ENCODE measurements at regions of chr12 and their contacts with region 1.

Region 1: GRCh38 chr12:103783744-103784664 is 57.0 kb downstream of the NT5DC3 start:
- DNase-seq: peak; percentile 46
- H3K4me3 ChIP-seq: no peak overlapping the region
- H3K27ac ChIP-seq: peak overlapping the region in 3 of 4 donors; percentile 44 to 58 (median 51)
- H3K4me1 ChIP-seq: peaks cover 0 to 16% (median 0%) of the 10 kb centered on the region in 4 donors
- H3K27me3 ChIP-seq: no peaks in the 10 kb centered on the region
- CTCF ChIP-seq: peak in 3 of 5 experiments; percentile 14 to 56 (median 35)
- EP300 ChIP-seq: no peak
- POLR2A ChIP-seq: no peak

Region 2: DNA sequence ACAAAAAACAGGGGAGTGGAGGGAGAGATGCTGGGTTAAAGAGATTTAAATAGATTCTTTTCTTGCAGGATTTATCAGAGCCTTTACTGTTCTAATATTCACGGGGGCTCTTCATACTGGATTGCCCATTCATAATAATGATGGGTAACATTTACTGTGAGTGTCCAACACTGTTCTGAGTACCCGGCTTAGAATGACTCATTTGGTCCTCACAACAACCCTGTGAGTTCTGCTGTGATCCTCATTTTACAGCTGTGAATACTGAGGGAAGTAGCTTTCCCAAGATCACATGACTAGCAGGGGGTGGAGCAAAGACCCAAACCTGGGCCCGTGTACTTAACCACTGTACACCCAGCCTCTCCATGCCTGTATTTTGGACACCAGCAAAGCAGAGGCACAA is 56.4 kb before region 1 on chr12:
- in situ Hi-C with region 1: no loop called
- intact Hi-C with region 1: no loop called
- DNase-seq: no peak
- H3K4me3 ChIP-seq: no peak overlapping the region
- H3K27ac ChIP-seq: no peak overlapping the region
- H3K4me1 ChIP-seq: no peaks in the 10 kb centered on the region
- H3K27me3 ChIP-seq: no peaks in the 10 kb centered on the region
- CTCF ChIP-seq: no peak
- EP300 ChIP-seq: no peak
- POLR2A ChIP-seq: no peak

Region 3: GRCh38 chr12:103737881-103738280 is 46.1 kb before region 1 on chr12:
- in situ Hi-C with region 1: no loop called
- intact Hi-C with region 1: loop called (anchors 2 kb)
- DNase-seq: no peak
- H3K4me3 ChIP-seq: no peak overlapping the region
- H3K27ac ChIP-seq: no peak overlapping the region
- H3K4me1 ChIP-seq: peaks cover 0 to 2% (median 0%) of the 10 kb centered on the region in 4 donors
- H3K27me3 ChIP-seq: no peaks in the 10 kb centered on the region
- CTCF ChIP-seq: no peak
- EP300 ChIP-seq: no peak
- POLR2A ChIP-seq: no peak

Measured in transverse colon (tissue), 4 donors.